Posterior vena cava (tissue), 2 donors: ENCODE measurements at regions of chr4 and their contacts with region 1.

Region 1: DNA sequence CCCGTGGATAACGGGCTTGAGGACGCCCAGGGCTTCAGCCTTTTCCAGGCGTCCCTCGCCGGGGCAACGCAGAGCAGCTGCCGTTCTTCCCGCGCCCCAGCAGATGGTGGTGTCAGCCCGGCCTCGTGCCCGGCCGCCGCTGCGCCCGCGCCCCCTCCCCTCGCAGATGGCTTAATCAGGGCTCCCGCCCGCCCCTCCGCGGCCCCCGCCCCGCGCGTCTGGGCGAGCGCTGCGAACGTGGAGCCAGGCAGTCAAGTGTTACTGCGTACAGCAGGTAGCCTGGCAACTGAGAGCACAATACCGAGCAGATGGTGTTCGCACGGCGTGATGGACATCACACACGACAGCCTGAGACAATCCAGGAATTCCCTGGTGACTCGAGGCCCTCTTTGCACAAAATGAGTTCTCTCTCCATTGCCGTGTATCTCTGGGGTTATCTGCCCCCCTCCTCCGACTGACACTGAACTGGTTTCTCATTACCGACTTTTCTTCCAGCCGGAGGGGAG is 69.3 kb downstream of the MGST2 start:
- DNase-seq: peak; percentile 96

Region 2: DNA sequence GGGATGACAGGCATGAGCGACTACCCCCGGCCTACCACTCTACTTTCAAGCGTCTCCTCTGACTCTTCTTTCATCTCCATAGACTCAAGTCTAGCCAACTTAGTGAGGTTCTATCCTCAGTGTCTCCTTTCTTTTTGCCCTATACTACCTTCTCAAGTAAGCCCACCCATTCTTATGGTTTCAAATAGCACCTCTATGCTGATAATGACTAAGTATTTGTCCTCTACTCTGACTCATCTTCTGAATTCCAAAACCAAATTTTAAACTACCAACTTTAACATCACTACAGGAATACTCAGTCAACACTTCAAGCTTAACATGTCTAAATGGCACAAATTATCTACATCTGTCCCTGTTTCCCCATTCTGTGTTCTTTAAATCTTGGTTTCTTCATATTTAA is 605.7 kb before region 1 on chr4:
- intact Hi-C with region 1: no loop called
- DNase-seq: no peak

Region 3: GRCh38 chr4:139651282-139652194 is 83.4 kb before region 1 on chr4:
- intact Hi-C with region 1: no loop called
- DNase-seq: peak; percentile 95

Region 4: GRCh38 chr4:140049024-140049848 is 314.3 kb after region 1 on chr4:
- intact Hi-C with region 1: loop called in 1 of 2 experiments (anchors 10 kb)
- DNase-seq: no peak

Region 5: GRCh38 chr4:140252742-140253555 is 518.0 kb after region 1 on chr4:
- intact Hi-C with region 1: loop called in 1 of 2 experiments (anchors 2 kb)
- DNase-seq: peak; percentile 91

Region 6: DNA sequence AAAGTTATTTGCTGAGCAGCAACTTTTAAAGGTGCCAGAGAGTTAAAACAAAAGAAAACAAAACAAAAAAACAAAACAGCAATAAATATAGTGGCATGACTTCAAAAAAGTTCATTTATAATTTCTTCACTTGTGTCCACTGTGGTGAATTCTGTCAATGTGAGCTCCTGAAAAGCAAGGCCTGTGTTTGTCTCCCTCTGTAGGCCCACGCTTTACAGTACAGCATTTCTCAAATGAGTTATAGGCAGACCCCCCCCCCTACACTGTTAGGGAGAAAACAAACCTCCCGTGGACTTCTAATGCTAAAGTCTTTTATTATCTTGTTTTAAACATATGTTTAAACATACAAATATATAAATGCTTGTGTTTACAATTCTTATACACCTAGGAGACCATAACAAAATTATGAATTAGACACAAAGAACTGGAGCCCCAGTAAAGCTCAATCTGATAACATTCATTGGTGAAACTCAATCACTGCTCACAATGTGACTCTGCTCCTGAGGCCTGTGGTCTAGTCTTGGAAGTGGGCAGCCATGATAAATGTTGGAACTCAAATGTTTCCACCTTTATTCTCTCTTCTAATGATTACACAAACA is 591.6 kb after region 1 on chr4:
- intact Hi-C with region 1: loop called in 1 of 2 experiments (anchors 10 kb)
- DNase-seq: no peak

Region 7: GRCh38 chr4:140427106-140427961 is 692.4 kb after region 1 on chr4 and contains the start of gene CLGN:
- intact Hi-C with region 1: loop called in 1 of 2 experiments (anchors 5 kb)
- DNase-seq: peak; percentile 84
- total RNA-seq, gene CLGN: 0.52 to 0.74 TPM